Sciatic nerve (tissue), 2 donors: ENCODE measurements at regions of chr5 and their contacts with region 1.

Region 1: DNA sequence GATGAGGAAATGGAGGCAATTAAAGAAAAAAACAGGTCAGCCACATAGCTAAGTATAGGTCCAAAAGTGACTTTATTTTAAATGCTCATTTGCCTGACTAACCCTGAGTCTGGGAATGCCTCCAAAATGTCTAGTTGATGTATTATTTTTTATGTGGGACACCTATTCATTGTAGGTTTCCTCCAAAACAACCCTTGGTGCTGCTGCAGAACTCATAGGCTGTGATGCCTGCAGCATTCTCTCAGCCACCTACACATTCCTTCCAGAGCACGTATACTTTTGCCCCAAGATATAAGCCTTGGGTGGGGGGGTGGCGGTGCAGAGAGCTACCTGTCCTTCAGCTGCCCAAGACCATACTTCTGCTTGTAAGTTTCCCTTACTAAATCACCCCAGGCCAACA is 77.4 kb downstream of the MSX2 start:
- DNase-seq: no peak
- ATAC-seq: no peak

Region 2: GRCh38 chr5:174514983-174515394 is 286.8 kb before region 1 on chr5:
- intact Hi-C with region 1: loop called (anchors 10 kb)
- DNase-seq: no peak
- ATAC-seq: no peak